Caco-2 (cell line): ENCODE measurements at regions of chr10 and their contacts with region 1.

Region 1: DNA sequence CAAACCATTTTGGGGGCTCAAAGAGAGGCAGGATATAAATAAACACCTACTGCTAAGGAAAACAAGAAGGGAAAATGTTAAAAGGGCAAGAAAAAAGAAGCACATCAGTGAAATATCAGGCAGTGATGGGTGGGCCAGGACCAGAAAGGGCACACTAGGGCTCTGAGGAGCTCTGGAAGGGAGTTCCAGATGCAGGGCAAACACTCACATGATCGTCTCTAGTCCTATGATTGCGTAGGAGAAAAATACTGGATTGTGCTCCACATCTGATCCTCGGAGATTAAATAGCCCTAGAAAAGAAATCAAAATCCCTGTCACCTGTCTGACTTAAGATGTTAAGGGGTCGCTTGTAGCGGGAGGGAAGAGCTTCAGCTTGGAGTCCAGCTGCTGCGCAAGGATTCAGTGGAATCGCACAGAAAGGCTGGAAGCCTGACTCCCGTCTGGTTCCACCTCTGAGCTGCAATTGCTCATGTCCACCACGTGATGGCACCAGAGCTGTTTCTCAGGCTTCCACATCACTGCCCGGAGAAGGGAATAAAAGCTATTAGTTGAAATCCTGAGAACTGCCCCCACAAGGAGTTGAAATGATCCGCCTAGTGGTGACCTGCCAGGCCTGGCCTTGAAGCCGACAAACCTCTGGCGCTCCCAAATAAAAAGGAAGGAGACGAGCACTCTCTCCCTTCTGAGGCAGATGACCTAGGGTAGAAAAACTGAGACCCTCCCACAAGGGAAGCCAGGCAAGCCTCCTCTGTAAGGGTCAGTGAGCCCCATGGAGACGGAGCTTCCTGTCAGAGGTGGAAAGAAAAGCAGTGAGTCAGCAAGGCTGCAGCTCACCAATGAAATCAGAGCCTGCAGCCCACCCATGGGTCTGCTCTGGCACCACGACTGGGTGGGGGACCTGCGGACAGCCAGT is 39.2 kb downstream of the XPNPEP1 start:
- DNase-seq: peak; percentile 82 to 87
- H3K4me3 ChIP-seq: no peak overlapping the region
- H3K4me3 Mint-ChIP-seq: no peak overlapping the region
- H3K27ac Mint-ChIP-seq: peak overlapping the region; percentile 83
- H3K4me1 ChIP-seq: peaks cover 11% of the 10 kb centered on the region; the same call in 1 of the 2 replicates
- H3K4me1 Mint-ChIP-seq: peaks cover 8% of the 10 kb centered on the region
- H3K27me3 ChIP-seq: no peaks in the 10 kb centered on the region
- H3K27me3 Mint-ChIP-seq: no peaks in the 10 kb centered on the region
- CTCF ChIP-seq: peak; percentile 94 to 96

Region 2: DNA sequence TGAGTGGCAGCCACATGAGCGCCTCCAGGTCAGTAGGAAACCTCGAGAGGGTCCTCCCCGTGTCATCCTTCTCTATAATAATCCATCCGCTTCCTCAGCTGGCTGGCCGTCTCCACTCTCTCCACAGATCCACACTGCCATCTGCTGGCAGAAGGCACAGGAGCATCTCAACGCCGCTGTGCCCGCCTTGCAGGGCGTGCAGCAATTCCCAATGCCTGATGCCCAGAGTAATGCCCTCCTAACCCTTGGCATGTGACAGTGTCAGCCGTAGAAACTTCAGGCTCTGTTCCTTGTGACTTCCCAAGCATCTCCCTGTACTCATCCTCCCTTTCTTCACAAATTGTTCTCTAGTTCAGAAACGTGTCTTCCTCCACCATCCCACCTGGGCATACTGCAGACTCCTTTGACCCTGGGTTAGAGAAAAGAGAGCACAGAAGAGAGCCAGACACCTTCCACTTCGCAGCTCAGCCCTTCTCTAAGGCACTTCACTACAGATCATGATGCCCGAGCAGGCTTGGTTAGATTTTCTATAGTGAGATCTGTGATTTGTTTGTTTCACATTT is 31.6 kb before region 1 on chr10:
- CTCF ChIA-PET with region 1: no interaction called
- POLR2A ChIA-PET with region 1: no interaction called
- intact Hi-C with region 1: no loop called
- DNase-seq: peak; percentile 71 to 81
- H3K4me3 ChIP-seq: no peak overlapping the region
- H3K4me3 Mint-ChIP-seq: no peak overlapping the region
- H3K27ac Mint-ChIP-seq: no peak overlapping the region
- H3K4me1 ChIP-seq: no peaks in the 10 kb centered on the region; the same call in 1 of the 2 replicates
- H3K4me1 Mint-ChIP-seq: peaks cover 7% of the 10 kb centered on the region
- H3K27me3 ChIP-seq: no peaks in the 10 kb centered on the region
- H3K27me3 Mint-ChIP-seq: peaks cover 6% of the 10 kb centered on the region
- CTCF ChIP-seq: peak; percentile 89 to 95

Region 3: DNA sequence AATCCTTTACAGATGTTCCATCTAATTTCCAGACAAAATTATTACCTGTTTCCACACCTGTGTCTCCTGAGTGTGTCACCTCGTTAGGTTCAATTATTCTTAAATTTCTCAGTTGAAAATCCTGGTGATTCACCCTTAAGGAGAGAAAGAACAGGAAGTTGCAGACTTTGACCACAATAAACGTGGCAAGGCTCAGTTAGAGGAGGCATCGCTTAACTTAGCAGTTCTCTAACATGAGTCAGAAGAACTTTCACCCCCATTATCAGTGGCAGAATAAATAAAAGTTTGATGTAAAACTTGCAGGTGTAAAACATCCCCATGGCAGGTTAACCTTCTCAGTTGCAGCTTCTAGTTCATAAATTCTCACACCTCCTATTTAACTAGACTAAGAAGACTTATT is 30.9 kb after region 1 on chr10:
- CTCF ChIA-PET with region 1: interaction called, 9 read pairs
- POLR2A ChIA-PET with region 1: no interaction called
- intact Hi-C with region 1: loop called (anchors 2 kb)
- DNase-seq: peak; percentile 57 to 66
- H3K4me3 ChIP-seq: no peak overlapping the region
- H3K4me3 Mint-ChIP-seq: peak overlapping the region; percentile 53
- H3K27ac Mint-ChIP-seq: peak overlapping the region; percentile 74
- H3K4me1 ChIP-seq: peaks cover 49% of the 10 kb centered on the region
- H3K4me1 Mint-ChIP-seq: peaks cover 32% of the 10 kb centered on the region
- H3K27me3 ChIP-seq: no peaks in the 10 kb centered on the region
- H3K27me3 Mint-ChIP-seq: no peaks in the 10 kb centered on the region
- CTCF ChIP-seq: no peak

Region 4: GRCh38 chr10:109978481-109978880 is 94.4 kb after region 1 on chr10:
- CTCF ChIA-PET with region 1: interaction called, 3 read pairs
- POLR2A ChIA-PET with region 1: no interaction called
- intact Hi-C with region 1: loop called (anchors 2 kb)
- DNase-seq: peak; percentile 45 to 60
- H3K4me3 ChIP-seq: no peak overlapping the region
- H3K4me3 Mint-ChIP-seq: peak overlapping the region; percentile 55
- H3K27ac Mint-ChIP-seq: peak overlapping the region; percentile 79
- H3K4me1 ChIP-seq: peaks cover 47% of the 10 kb centered on the region
- H3K4me1 Mint-ChIP-seq: peaks cover 69% of the 10 kb centered on the region
- H3K27me3 ChIP-seq: no peaks in the 10 kb centered on the region
- H3K27me3 Mint-ChIP-seq: no peaks in the 10 kb centered on the region
- CTCF ChIP-seq: peak; percentile 42 to 65

Region 5: DNA sequence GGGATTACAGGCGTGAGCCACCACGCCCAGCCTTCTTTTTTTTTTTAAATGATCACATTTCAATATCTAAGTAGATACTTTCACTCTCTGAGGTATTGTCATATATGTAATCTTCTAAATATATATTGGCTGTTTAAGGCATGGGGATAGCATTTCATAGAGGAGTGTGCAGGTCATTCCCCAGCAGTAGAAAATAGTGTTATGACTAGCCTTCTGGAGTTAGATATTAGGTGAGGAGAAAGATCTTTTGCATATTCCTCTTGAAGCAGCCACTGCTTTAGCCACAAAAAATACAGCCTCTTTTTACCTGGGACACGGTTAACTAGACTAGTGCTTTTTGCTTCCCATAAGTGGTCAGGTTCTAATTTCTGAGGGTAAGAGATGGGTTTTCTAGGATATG is 152.5 kb after region 1 on chr10:
- CTCF ChIA-PET with region 1: interaction called, 11 read pairs
- POLR2A ChIA-PET with region 1: no interaction called
- intact Hi-C with region 1: no loop called
- DNase-seq: no peak
- H3K4me3 ChIP-seq: no peak overlapping the region
- H3K4me3 Mint-ChIP-seq: no peak overlapping the region
- H3K27ac Mint-ChIP-seq: no peak overlapping the region
- H3K4me1 ChIP-seq: peaks cover 12% of the 10 kb centered on the region; the same call in 1 of the 2 replicates
- H3K4me1 Mint-ChIP-seq: peaks cover 36% of the 10 kb centered on the region
- H3K27me3 ChIP-seq: no peaks in the 10 kb centered on the region
- H3K27me3 Mint-ChIP-seq: no peaks in the 10 kb centered on the region
- CTCF ChIP-seq: no peak

Region 6: GRCh38 chr10:110137142-110137545 is 253.0 kb after region 1 on chr10:
- CTCF ChIA-PET with region 1: interaction called, 3 read pairs
- POLR2A ChIA-PET with region 1: no interaction called
- intact Hi-C with region 1: loop called (anchors 1 kb)
- DNase-seq: peak in 1 of 2 experiments; percentile 64
- H3K4me3 ChIP-seq: no peak overlapping the region
- H3K4me3 Mint-ChIP-seq: no peak overlapping the region
- H3K27ac Mint-ChIP-seq: no peak overlapping the region
- H3K4me1 ChIP-seq: no peaks in the 10 kb centered on the region
- H3K4me1 Mint-ChIP-seq: peaks cover 9% of the 10 kb centered on the region
- H3K27me3 ChIP-seq: no peaks in the 10 kb centered on the region
- H3K27me3 Mint-ChIP-seq: no peaks in the 10 kb centered on the region
- CTCF ChIP-seq: peak; percentile 67 to 72